K562 (cell line): ENCODE measurements at regions of chr11 and their contacts with region 1.

Region 1: GRCh38 chr11:102495161-102496042 is 35.1 kb downstream of the MMP7 start:
- DNase-seq: peak; percentile 49 to 86 (median 56)
- ATAC-seq: peak; percentile 91
- H3K4me3 ChIP-seq: no peak overlapping the region
- H3K27ac ChIP-seq: no peak overlapping the region
- H3K4me1 ChIP-seq: no peaks in the 10 kb centered on the region
- H3K27me3 ChIP-seq: peaks cover 4 to 9% of the 10 kb centered on the region in 2 experiments; a peak in 4 of 5 replicates
- CTCF ChIP-seq: peak; percentile 60 to 83 (median 72); a peak in 5 of 6 replicates
- EP300 ChIP-seq: no peak
- POLR2A ChIP-seq: no peak
- RAD21 ChIP-seq: peak; percentile 93 to 95

Region 2: GRCh38 chr11:101860696-101861427 is 634.5 kb before region 1 on chr11:
- CTCF ChIA-PET with region 1: no interaction called
- POLR2A ChIA-PET with region 1: no interaction called
- in situ Hi-C with region 1: no loop called
- intact Hi-C with region 1: loop called (anchors 5 kb)
- DNase-seq: peak; percentile 7 to 16 (median 10)
- ATAC-seq: peak; percentile 63
- H3K4me3 ChIP-seq: no peak overlapping the region
- H3K27ac ChIP-seq: no peak overlapping the region
- H3K4me1 ChIP-seq: no peaks in the 10 kb centered on the region
- H3K27me3 ChIP-seq: no peaks in the 10 kb centered on the region
- CTCF ChIP-seq: peak; percentile 22 to 43 (median 39); a peak in 3 of 6 replicates
- EP300 ChIP-seq: no peak
- POLR2A ChIP-seq: no peak
- RAD21 ChIP-seq: peak in 1 of 2 experiments; percentile 40; a peak in 2 of 4 replicates

Region 3: GRCh38 chr11:102293873-102294601 is 201.4 kb before region 1 on chr11:
- CTCF ChIA-PET with region 1: interaction called, 13 read pairs
- POLR2A ChIA-PET with region 1: no interaction called
- in situ Hi-C with region 1: loop called (anchors 10 kb)
- intact Hi-C with region 1: loop called (anchors 1 kb)
- DNase-seq: peak in 2 of 4 experiments; percentile 33 to 51
- ATAC-seq: peak; percentile 92
- H3K4me3 ChIP-seq: no peak overlapping the region
- H3K27ac ChIP-seq: no peak overlapping the region
- H3K4me1 ChIP-seq: no peaks in the 10 kb centered on the region; a peak in 2 of 5 replicates
- H3K27me3 ChIP-seq: peaks cover 0 to 5% of the 10 kb centered on the region in 2 experiments; a peak in 2 of 5 replicates
- CTCF ChIP-seq: peak; percentile 56 to 72 (median 56); a peak in 5 of 6 replicates
- EP300 ChIP-seq: no peak
- POLR2A ChIP-seq: no peak
- RAD21 ChIP-seq: peak; percentile 59 to 69

Region 4: DNA sequence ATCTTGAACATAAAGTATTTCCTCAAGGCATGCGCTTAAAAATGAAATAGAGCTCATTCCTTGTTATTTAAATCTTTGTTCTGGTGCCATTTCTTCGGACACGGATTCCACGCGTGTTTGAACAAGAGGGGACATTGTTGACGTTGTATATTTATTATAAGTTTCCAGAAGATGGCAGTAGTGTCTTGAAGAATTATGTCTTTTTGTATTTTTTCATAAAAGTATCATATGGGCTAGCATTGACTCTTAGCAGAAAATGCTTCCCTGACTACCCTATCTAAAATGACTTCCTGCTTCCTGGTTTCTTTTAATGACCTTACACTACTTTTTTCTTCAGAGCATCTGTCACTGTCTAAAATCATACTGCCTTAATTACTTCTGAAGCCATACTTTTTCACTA is 128.0 kb before region 1 on chr11:
- CTCF ChIA-PET with region 1: interaction called, 19 read pairs
- POLR2A ChIA-PET with region 1: no interaction called
- in situ Hi-C with region 1: no loop called
- intact Hi-C with region 1: loop called (anchors 1 kb)
- DNase-seq: peak in 3 of 4 experiments; percentile 10 to 25 (median 21)
- ATAC-seq: peak; percentile 81
- H3K4me3 ChIP-seq: no peak overlapping the region
- H3K27ac ChIP-seq: no peak overlapping the region
- H3K4me1 ChIP-seq: no peaks in the 10 kb centered on the region
- H3K27me3 ChIP-seq: no peaks in the 10 kb centered on the region
- CTCF ChIP-seq: peak; percentile 14 to 50 (median 27); a peak in 2 of 6 replicates
- EP300 ChIP-seq: no peak
- POLR2A ChIP-seq: no peak
- RAD21 ChIP-seq: peak; percentile 44 to 65

Region 5: DNA sequence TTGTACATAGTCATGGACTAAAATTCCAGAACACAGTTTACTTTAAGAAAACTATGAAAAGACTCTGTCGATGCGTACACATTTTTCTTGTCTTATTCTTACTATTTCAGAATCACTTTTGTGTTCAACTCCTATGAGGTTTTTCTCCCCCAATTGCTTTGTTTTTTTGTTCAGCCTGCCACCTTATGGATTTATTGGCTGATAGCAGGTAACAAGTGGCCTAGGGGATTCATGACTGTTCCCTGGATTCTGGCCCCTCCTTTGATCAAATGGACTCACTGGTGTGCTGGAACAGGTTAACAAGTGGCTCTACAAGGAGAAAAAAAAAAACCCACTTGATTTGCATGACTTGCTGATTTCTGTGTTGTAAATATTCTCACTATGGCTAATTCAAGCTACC is 119.1 kb after region 1 on chr11:
- CTCF ChIA-PET with region 1: no interaction called
- POLR2A ChIA-PET with region 1: no interaction called
- in situ Hi-C with region 1: no loop called
- intact Hi-C with region 1: loop called (anchors 5 kb)
- DNase-seq: no peak
- ATAC-seq: no peak
- H3K4me3 ChIP-seq: no peak overlapping the region
- H3K27ac ChIP-seq: no peak overlapping the region
- H3K4me1 ChIP-seq: no peaks in the 10 kb centered on the region
- H3K27me3 ChIP-seq: peaks cover 0 to 10% of the 10 kb centered on the region in 2 experiments; a peak in 2 of 5 replicates
- CTCF ChIP-seq: no peak
- EP300 ChIP-seq: no peak
- POLR2A ChIP-seq: no peak
- RAD21 ChIP-seq: no peak